ENCODE measurements at regions of chr3 and their contacts with region 1.

Region 1: GRCh38 chr3:56801662-56802377 is at the start of gene ARHGEF3:
- DNase-seq: peak; percentile 76 to 94 (median 87)
- ATAC-seq: peak; percentile 76
- H3K4me3 ChIP-seq: peak within 1 kb of the TSS; percentile 98
- H3K4me3 Mint-ChIP-seq: peak within 1 kb of the TSS; percentile 95
- H3K27ac ChIP-seq: peak within 1 kb of the TSS; percentile 75 to 82
- H3K27ac Mint-ChIP-seq: peak within 1 kb of the TSS; percentile 89
- H3K4me1 ChIP-seq: peaks cover 23% of the 10 kb centered on the region
- H3K4me1 Mint-ChIP-seq: peaks cover 57% of the 10 kb centered on the region
- H3K27me3 ChIP-seq: no peaks in the 10 kb centered on the region
- H3K27me3 Mint-ChIP-seq: no peaks in the 10 kb centered on the region
- CTCF ChIP-seq: peak; percentile 72
- total RNA-seq, gene ARHGEF3: 46.4 to 46.6 TPM

Region 2: GRCh38 chr3:56019490-56020146 is 782.2 kb before region 1 on chr3:
- CTCF ChIA-PET with region 1: no interaction called
- POLR2A ChIA-PET with region 1: no interaction called
- intact Hi-C with region 1: no loop called
- DNase-seq: no peak
- ATAC-seq: no peak
- H3K4me3 ChIP-seq: no peak overlapping the region
- H3K4me3 Mint-ChIP-seq: no peak overlapping the region
- H3K27ac ChIP-seq: no peak overlapping the region
- H3K27ac Mint-ChIP-seq: no peak overlapping the region
- H3K4me1 ChIP-seq: no peaks in the 10 kb centered on the region
- H3K4me1 Mint-ChIP-seq: no peaks in the 10 kb centered on the region
- H3K27me3 ChIP-seq: no peaks in the 10 kb centered on the region
- H3K27me3 Mint-ChIP-seq: no peaks in the 10 kb centered on the region
- CTCF ChIP-seq: no peak

Region 3: GRCh38 chr3:56682462-56683121 is 119.2 kb before region 1 on chr3:
- CTCF ChIA-PET with region 1: interaction called, 4 read pairs
- POLR2A ChIA-PET with region 1: interaction called, 56 read pairs
- intact Hi-C with region 1: loop called in 1 of 2 experiments (anchors 2 kb)
- DNase-seq: peak; percentile 65 to 91 (median 74)
- ATAC-seq: peak; percentile 69
- H3K4me3 ChIP-seq: peak overlapping the region; percentile 79
- H3K4me3 Mint-ChIP-seq: peak overlapping the region; percentile 95
- H3K27ac ChIP-seq: peak overlapping the region; percentile 98 to 99
- H3K27ac Mint-ChIP-seq: peak overlapping the region; percentile 99
- H3K4me1 ChIP-seq: peaks cover 20% of the 10 kb centered on the region
- H3K4me1 Mint-ChIP-seq: peaks cover 44% of the 10 kb centered on the region
- H3K27me3 ChIP-seq: no peaks in the 10 kb centered on the region
- H3K27me3 Mint-ChIP-seq: no peaks in the 10 kb centered on the region
- CTCF ChIP-seq: no peak

Region 4: GRCh38 chr3:56725175-56725574 is 76.6 kb before region 1 on chr3:
- CTCF ChIA-PET with region 1: interaction called, 4 read pairs
- POLR2A ChIA-PET with region 1: interaction called, 27 read pairs
- intact Hi-C with region 1: no loop called
- DNase-seq: peak; percentile 8 to 81 (median 32)
- ATAC-seq: peak; percentile 88
- H3K4me3 ChIP-seq: no peak overlapping the region
- H3K4me3 Mint-ChIP-seq: peak overlapping the region; percentile 55
- H3K27ac ChIP-seq: peak overlapping the region; percentile 22 to 57
- H3K27ac Mint-ChIP-seq: peak overlapping the region; percentile 87
- H3K4me1 ChIP-seq: peaks cover 29% of the 10 kb centered on the region
- H3K4me1 Mint-ChIP-seq: peaks cover 54% of the 10 kb centered on the region
- H3K27me3 ChIP-seq: no peaks in the 10 kb centered on the region
- H3K27me3 Mint-ChIP-seq: no peaks in the 10 kb centered on the region
- CTCF ChIP-seq: no peak

Region 5: GRCh38 chr3:56769116-56769707 is 32.6 kb before region 1 on chr3:
- CTCF ChIA-PET with region 1: interaction called, 16 read pairs
- POLR2A ChIA-PET with region 1: interaction called, 16 read pairs
- intact Hi-C with region 1: no loop called
- DNase-seq: no peak
- ATAC-seq: no peak
- H3K4me3 ChIP-seq: no peak overlapping the region
- H3K4me3 Mint-ChIP-seq: no peak overlapping the region
- H3K27ac ChIP-seq: no peak overlapping the region
- H3K27ac Mint-ChIP-seq: peak overlapping the region; percentile 39
- H3K4me1 ChIP-seq: peaks cover 31% of the 10 kb centered on the region
- H3K4me1 Mint-ChIP-seq: peaks cover 76% of the 10 kb centered on the region
- H3K27me3 ChIP-seq: no peaks in the 10 kb centered on the region
- H3K27me3 Mint-ChIP-seq: no peaks in the 10 kb centered on the region
- CTCF ChIP-seq: no peak

Region 6: GRCh38 chr3:56790016-56790821 is 11.6 kb before region 1 on chr3:
- CTCF ChIA-PET with region 1: interaction called, 114 read pairs
- POLR2A ChIA-PET with region 1: interaction called, 251 read pairs
- intact Hi-C with region 1: loop called (anchors 1 to 2 kb)
- DNase-seq: peak in 4 of 14 experiments; percentile 54 to 82 (median 63)
- ATAC-seq: peak; percentile 51
- H3K4me3 ChIP-seq: no peak overlapping the region
- H3K4me3 Mint-ChIP-seq: peak overlapping the region; percentile 74
- H3K27ac ChIP-seq: peak overlapping the region; percentile 59 to 70
- H3K27ac Mint-ChIP-seq: peak overlapping the region; percentile 88
- H3K4me1 ChIP-seq: peaks cover 85% of the 10 kb centered on the region
- H3K4me1 Mint-ChIP-seq: peaks cover 89% of the 10 kb centered on the region
- H3K27me3 ChIP-seq: no peaks in the 10 kb centered on the region
- H3K27me3 Mint-ChIP-seq: no peaks in the 10 kb centered on the region
- CTCF ChIP-seq: no peak

Region 7: DNA sequence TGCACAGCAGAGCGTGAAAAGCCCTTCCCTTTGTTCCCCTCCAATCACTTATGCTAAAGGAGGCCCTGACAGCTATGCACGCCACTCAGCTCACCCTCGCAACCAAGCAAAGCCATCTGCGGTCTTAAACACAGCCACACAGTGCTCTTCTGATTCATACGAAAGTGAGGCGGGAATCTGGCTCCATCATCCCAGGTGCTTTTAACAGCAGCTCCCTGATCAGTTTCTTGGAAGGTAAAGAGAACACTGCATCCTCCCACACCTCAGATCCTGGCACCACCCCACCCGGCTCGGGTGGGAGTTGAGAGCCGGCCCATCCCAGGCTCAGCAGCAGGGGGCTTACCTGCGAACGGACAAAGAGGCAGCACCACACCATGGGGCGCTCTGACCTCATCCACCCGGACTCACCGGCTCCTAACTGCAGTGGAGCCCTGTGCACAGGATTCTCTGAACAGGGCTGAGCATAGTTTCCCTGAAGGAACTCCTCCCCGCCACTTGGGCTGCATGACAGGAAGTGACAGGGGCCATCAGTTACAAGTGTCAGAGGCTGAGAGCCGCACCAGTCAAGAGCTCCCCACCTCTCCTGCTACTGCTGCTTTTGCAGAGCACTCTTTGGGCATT is 114.3 kb after region 1 on chr3:
- CTCF ChIA-PET with region 1: interaction called, 8 read pairs
- POLR2A ChIA-PET with region 1: interaction called, 91 read pairs
- intact Hi-C with region 1: loop called (anchors 2 to 5 kb)
- DNase-seq: peak; percentile 53 to 86 (median 70)
- ATAC-seq: peak; percentile 94
- H3K4me3 ChIP-seq: peak overlapping the region; percentile 63
- H3K4me3 Mint-ChIP-seq: peak overlapping the region; percentile 92
- H3K27ac ChIP-seq: peak overlapping the region; percentile 69 to 75
- H3K27ac Mint-ChIP-seq: peak overlapping the region; percentile 94
- H3K4me1 ChIP-seq: peaks cover 49% of the 10 kb centered on the region
- H3K4me1 Mint-ChIP-seq: peaks cover 88% of the 10 kb centered on the region
- H3K27me3 ChIP-seq: no peaks in the 10 kb centered on the region
- H3K27me3 Mint-ChIP-seq: no peaks in the 10 kb centered on the region
- CTCF ChIP-seq: no peak

Region 8: DNA sequence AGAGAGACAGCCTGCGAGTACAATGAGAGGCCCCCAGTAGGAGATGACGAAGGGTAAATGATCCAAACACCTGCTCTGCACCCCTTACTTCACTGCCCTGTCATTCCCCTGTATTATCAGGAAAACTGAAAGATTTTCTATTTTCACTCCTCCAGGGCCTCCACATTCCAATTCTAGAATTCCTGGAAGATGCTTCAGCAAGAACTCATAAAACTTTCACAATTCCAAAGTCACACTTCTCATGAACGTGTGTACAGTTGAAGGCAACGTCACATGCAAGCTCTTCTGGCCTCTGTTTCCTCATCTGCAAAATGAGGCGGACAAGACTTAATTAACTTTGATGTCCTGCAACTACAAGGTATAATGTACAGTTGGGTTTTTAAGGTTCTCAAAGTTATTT is 195.9 kb after region 1 on chr3:
- CTCF ChIA-PET with region 1: interaction called, 10 read pairs
- POLR2A ChIA-PET with region 1: interaction called, 4 read pairs
- intact Hi-C with region 1: no loop called
- DNase-seq: no peak
- ATAC-seq: no peak
- H3K4me3 ChIP-seq: no peak overlapping the region
- H3K4me3 Mint-ChIP-seq: no peak overlapping the region
- H3K27ac ChIP-seq: no peak overlapping the region
- H3K27ac Mint-ChIP-seq: no peak overlapping the region
- H3K4me1 ChIP-seq: no peaks in the 10 kb centered on the region
- H3K4me1 Mint-ChIP-seq: no peaks in the 10 kb centered on the region
- H3K27me3 ChIP-seq: no peaks in the 10 kb centered on the region
- H3K27me3 Mint-ChIP-seq: no peaks in the 10 kb centered on the region
- CTCF ChIP-seq: no peak

Measured in CD4-positive, alpha-beta T cell (primary cell).